ENCODE measurements at regions of chr16 and their contacts with region 1.

Region 1: GRCh38 chr16:3364774-3365427 is 9.2 kb downstream of the OR2C1 start:
- DNase-seq: peak; percentile 91
- H3K4me3 Mint-ChIP-seq: peak overlapping the region; percentile 78
- H3K27ac Mint-ChIP-seq: peak overlapping the region; percentile 79
- H3K4me1 Mint-ChIP-seq: peaks cover 10% of the 10 kb centered on the region
- H3K27me3 Mint-ChIP-seq: peaks cover 3% of the 10 kb centered on the region

Region 2: GRCh38 chr16:3349175-3349574 is 15.7 kb before region 1 on chr16:
- CTCF ChIA-PET with region 1: no interaction called
- intact Hi-C with region 1: no loop called
- DNase-seq: no peak
- H3K4me3 Mint-ChIP-seq: no peak overlapping the region
- H3K27ac Mint-ChIP-seq: no peak overlapping the region
- H3K4me1 Mint-ChIP-seq: no peaks in the 10 kb centered on the region
- H3K27me3 Mint-ChIP-seq: no peaks in the 10 kb centered on the region

Region 3: GRCh38 chr16:3443108-3444031 is 78.5 kb after region 1 on chr16 and contains the starts of genes NAA60 and ZNF597:
- CTCF ChIA-PET with region 1: no interaction called
- intact Hi-C with region 1: loop called (anchors 2 kb)
- DNase-seq: peak; percentile 87
- H3K4me3 Mint-ChIP-seq: peak within 1 kb of the TSS; percentile 95
- H3K27ac Mint-ChIP-seq: peak within 1 kb of the TSS; percentile 93
- H3K4me1 Mint-ChIP-seq: peaks cover 23% of the 10 kb centered on the region
- H3K27me3 Mint-ChIP-seq: no peaks in the 10 kb centered on the region
- total RNA-seq, gene NAA60: 20.0 to 27.1 TPM
- total RNA-seq, gene ZNF597: 1.1 TPM